Heart left ventricle (tissue), 16 donors: ENCODE measurements at regions of chr12 and their contacts with region 1.

Region 1: GRCh38 chr12:48995061-48995879 is 3.9 kb downstream of the DDN start:
- DNase-seq: peak; percentile 76 to 87 (median 85)
- ATAC-seq: peak; percentile 66 to 85 (median 72)
- H3K4me3 ChIP-seq: peak overlapping the region in 9 of 12 donors; percentile 19 to 50 (median 35)
- H3K27ac ChIP-seq: no peak overlapping the region
- H3K4me1 ChIP-seq: peaks cover 4 to 50% (median 35%) of the 10 kb centered on the region in 12 donors
- H3K27me3 ChIP-seq: peaks cover 3 to 72% (median 9%) of the 10 kb centered on the region in 9 donors
- CTCF ChIP-seq: peak; percentile 68 to 91 (median 84)
- POLR2A ChIP-seq: no peak

Region 2: DNA sequence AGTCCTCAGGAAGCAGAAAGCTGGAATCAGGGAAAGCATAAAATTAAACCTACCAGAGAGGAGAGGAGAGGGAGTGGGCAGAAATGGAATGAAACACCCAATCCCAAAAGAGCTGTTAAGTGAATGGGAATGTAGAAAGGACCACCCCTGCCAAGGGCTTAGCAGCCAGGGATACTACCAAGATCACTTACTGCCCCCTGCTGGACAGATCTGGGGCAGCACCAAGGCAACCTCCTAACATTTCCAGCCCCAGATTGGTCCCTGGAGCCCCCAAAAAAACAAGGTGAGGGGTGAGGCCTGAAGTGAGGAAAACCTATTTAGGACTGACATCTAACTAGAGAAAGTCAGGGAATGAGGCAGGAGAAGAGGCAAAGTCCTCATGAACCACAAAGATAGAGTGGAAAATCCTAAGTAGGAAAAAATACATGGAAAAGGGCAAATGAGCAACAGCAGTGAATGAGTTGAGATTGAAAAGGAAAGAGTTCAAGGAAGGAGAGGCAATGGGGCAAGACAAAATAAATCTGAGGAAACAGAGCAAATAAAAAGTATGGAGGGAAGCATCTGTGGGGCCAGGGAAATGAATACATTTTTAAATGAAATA is 58.8 kb before region 1 on chr12:
- intact Hi-C with region 1: loop called in 1 of 10 experiments (anchors 5 kb)
- DNase-seq: peak; percentile 56 to 77 (median 70)
- ATAC-seq: peak in 3 of 4 donors; percentile 56 to 74 (median 70)
- H3K4me3 ChIP-seq: no peak overlapping the region
- H3K27ac ChIP-seq: no peak overlapping the region
- H3K4me1 ChIP-seq: peaks cover 0 to 14% (median under 1%) of the 10 kb centered on the region in 12 donors
- H3K27me3 ChIP-seq: no peaks in the 10 kb centered on the region
- CTCF ChIP-seq: peak; percentile 69 to 96 (median 90)
- POLR2A ChIP-seq: no peak

Region 3: GRCh38 chr12:49018261-49019119 is 23.2 kb after region 1 on chr12 and contains the start of gene PRKAG1:
- intact Hi-C with region 1: loop called in 1 of 10 experiments (anchors 2 kb)
- DNase-seq: peak; percentile 96 to 99 (median 97)
- ATAC-seq: peak; percentile 93 to 97 (median 96)
- H3K4me3 ChIP-seq: peak within 1 kb of the TSS; percentile 63 to 98 (median 82)
- H3K27ac ChIP-seq: peak within 1 kb of the TSS; percentile 78 to 99 (median 95)
- H3K4me1 ChIP-seq: peaks cover 0 to 46% (median 28%) of the 10 kb centered on the region in 12 donors
- H3K27me3 ChIP-seq: no peaks in the 10 kb centered on the region
- CTCF ChIP-seq: peak in 11 of 12 donors; percentile 9 to 73 (median 55)
- POLR2A ChIP-seq: peak; percentile 24 to 92
- total RNA-seq, gene PRKAG1: 72.0 to 107 (median 98.6) TPM

Region 4: GRCh38 chr12:49198431-49199155 is 203.3 kb after region 1 on chr12:
- intact Hi-C with region 1: no loop called
- DNase-seq: peak; percentile 56 to 67 (median 62)
- ATAC-seq: peak in 3 of 4 donors; percentile 42 to 51 (median 48)
- H3K4me3 ChIP-seq: no peak overlapping the region
- H3K27ac ChIP-seq: peak overlapping the region in 3 of 12 donors; percentile 3 to 17 (median 7)
- H3K4me1 ChIP-seq: peaks cover 7 to 61% (median 21%) of the 10 kb centered on the region in 12 donors
- H3K27me3 ChIP-seq: no peaks in the 10 kb centered on the region
- CTCF ChIP-seq: no peak
- POLR2A ChIP-seq: no peak